WTC11 (cell line): ENCODE measurements at regions of chr16 and their contacts with region 1.

Region 1: DNA sequence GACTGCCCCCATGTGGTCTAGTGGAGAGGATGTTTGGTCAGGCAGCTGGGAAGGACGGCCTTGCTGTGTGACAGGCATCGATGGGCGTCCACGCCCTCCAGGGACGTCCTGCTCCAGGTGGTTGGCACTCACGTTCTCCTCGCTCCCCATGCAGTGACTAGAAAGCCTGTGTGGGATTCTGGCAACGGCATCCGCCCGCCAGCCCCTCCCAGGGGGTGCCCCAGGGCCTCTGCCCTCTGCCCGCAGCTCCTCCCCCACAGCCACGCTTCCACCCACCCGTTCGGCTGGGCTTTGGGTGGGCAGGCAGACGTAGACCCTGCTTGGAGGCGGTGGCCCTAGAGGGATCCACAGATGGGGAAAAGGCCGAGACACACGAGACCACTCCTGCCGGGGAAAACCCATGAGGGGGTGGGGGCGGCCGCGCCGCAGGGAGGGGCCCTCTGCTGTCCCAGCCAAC is 4.7 kb upstream of the IL17C start:
- DNase-seq: peak; percentile 67
- ATAC-seq: peak; percentile 45
- H3K4me3 Mint-ChIP-seq: peak overlapping the region; percentile 69
- H3K27ac Mint-ChIP-seq: no peak overlapping the region
- H3K4me1 Mint-ChIP-seq: peaks cover 33% of the 10 kb centered on the region
- H3K27me3 Mint-ChIP-seq: peaks cover 10% of the 10 kb centered on the region
- CTCF ChIP-seq: no peak

Region 2: DNA sequence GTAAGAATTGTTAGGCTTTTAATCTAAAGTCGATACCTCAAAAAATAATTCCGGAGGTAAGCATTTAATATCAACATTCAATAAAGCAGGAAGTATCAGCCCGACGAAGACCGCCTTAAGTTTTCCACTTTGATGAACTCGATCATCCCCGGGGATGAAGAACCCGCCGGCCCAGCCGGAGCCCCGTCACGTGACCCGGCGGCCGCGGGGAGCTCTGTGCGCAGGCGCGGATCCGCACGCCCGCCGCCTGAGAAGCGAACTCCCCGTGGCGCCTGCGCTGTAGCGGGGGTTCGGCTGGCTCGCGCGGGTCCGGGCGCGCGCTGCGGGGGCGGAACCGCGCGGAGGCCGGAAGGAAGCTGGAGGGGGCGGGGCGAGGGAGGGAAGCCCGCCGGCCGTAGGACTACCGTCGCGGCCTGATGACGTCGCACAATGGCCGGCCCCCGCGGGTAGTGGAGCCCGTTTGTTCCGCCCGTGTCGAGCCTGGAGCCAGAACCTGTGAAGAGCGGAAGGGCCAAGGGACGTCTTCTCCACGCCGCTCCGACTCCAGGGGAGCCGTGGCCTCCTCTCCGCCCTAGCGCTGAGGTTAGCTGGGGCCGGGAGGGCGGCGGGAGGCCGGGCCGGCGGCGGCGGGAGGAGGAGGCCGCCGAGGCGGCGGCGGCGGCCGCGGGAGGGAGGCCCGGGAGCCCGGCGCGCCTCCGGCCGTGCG is 63.6 kb before region 1 on chr16 and contains the start of gene ZC3H18:
- CTCF ChIA-PET with region 1: interaction called, 10 read pairs
- POLR2A ChIA-PET with region 1: interaction called, 5 read pairs
- DNase-seq: peak; percentile 93
- ATAC-seq: peak; percentile 94
- H3K4me3 Mint-ChIP-seq: peak within 1 kb of the TSS; percentile 88
- H3K27ac Mint-ChIP-seq: peak within 1 kb of the TSS; percentile 55
- H3K4me1 Mint-ChIP-seq: peaks cover 15% of the 10 kb centered on the region
- H3K27me3 Mint-ChIP-seq: no peaks in the 10 kb centered on the region
- CTCF ChIP-seq: no peak
- total RNA-seq, gene ZC3H18: 57.3 to 65.6 TPM (median 61.8 TPM) in 3 replicates

Region 3: GRCh38 chr16:88619859-88620815 is 13.6 kb before region 1 on chr16:
- CTCF ChIA-PET with region 1: interaction called, 29 read pairs
- POLR2A ChIA-PET with region 1: interaction called, 3 read pairs
- DNase-seq: no peak
- ATAC-seq: no peak
- H3K4me3 Mint-ChIP-seq: no peak overlapping the region
- H3K27ac Mint-ChIP-seq: 0 out of 2 replicates have a peak overlapping the region, but pooled peaks have one; percentile 19
- H3K4me1 Mint-ChIP-seq: peaks cover 4% of the 10 kb centered on the region
- H3K27me3 Mint-ChIP-seq: no peaks in the 10 kb centered on the region
- CTCF ChIP-seq: no peak

Region 4: DNA sequence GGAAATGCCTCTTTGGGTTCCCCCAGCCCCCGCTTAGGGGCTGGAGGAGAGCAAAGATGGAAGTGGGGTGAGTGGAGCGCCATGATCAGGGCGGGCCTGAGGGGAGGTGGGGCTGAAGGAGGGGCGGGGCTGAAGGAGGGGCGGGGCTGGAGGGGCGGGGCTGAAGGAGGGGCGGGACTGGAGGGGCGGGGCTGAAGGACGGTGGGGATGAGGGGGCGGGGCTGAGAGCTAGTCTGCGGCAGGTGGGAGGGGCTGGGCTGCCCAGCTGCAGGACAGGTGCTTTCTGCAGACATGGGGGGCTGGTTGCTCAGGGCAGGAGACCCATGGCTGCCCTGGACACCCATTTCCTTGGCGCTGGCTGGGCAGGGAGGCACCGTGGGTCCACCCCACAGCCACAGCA is 271.9 kb after region 1 on chr16:
- CTCF ChIA-PET with region 1: no interaction called
- POLR2A ChIA-PET with region 1: no interaction called
- DNase-seq: peak; percentile 73
- ATAC-seq: peak; percentile 63
- H3K4me3 Mint-ChIP-seq: no peak overlapping the region
- H3K27ac Mint-ChIP-seq: no peak overlapping the region
- H3K4me1 Mint-ChIP-seq: peaks cover 2% of the 10 kb centered on the region; the same call in 1 of the 2 replicates
- H3K27me3 Mint-ChIP-seq: no peaks in the 10 kb centered on the region
- CTCF ChIP-seq: no peak